ENCODE measurements at regions of chr20 and their contacts with region 1.

Region 1: DNA sequence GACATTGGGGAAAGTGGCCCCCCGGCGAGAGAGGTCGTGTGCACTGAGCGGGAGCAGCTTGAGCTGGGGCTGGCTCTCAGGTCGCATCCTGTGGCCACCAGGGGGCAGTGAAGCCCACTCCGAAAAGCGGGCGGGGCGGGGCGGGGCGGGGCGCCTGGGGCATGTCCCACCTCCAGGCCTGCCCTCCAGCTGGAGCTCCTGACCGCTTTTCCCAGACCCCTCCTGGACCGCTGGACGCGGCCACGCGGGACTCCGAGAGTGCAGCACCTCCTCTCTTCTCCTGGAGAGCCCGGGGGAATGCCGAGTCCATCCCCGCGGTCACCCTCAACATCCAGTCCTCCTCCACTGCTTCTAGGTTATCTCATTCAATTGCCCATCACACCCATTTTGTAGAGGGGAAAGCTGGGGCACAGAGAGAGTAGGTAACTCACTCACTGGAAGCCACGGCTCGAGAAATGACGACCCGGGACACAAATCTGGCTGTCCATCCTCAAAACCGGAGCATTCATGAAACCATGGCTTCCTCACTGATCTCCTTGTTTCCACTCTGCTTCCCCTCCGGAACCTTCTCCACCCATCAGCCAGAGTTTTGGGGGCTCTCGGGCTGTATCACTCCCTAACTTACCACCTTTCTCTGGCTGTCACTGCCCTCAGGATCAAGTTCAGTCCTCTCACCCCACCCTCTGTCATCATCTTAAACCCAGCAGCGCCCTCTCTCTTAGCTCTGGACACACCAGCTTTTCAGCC is 24.1 kb downstream of the COX4I2 start:
- DNase-seq: peak; percentile 78 to 81
- H3K4me3 ChIP-seq: no peak overlapping the region
- H3K27ac ChIP-seq: peak overlapping the region; percentile 59 to 69 (median 68)
- H3K4me1 ChIP-seq: peaks cover 26 to 51% of the 10 kb centered on the region in 2 donors
- H3K27me3 ChIP-seq: no peaks in the 10 kb centered on the region
- CTCF ChIP-seq: peak; percentile 44 to 85 (median 66)
- POLR2A ChIP-seq: peak in 1 of 2 donors; percentile 66

Region 2: DNA sequence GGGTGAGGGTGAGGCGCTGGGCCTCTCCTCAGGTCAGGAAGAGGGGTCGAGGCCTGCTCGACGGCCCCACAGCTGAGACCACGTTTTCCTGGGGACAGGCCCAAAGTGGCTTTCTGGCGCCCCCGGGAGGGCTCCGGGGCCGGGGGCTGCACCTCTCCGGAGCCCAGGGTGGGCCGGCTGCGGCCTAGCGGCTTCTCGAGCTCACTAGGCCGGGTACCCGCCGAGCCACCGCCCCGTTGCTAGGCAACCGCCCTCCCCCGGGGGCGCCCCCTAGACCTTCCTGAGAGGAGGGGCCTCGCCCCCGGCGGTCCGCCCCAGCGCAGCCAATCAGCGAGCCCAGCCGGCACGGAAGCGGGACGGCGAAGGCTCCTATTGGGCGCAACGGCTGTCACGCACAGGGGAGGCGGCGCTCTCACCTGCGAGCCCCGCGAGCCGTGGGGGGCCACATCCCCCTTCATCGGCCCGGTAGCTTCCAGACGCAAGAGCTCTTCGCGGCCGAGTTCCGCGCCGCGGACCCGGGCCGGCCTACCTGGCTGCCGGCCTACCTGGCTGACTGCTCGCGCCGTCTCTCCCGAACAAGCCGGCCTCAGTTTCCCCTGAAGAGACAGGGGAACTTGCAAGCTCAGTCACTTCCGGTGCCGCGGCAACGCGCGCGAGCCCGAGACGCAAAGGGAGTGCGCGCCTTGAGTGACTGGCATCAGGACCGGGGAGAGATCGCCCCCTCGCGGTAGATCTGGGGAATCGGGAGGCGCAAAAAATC is 61.7 kb after region 1 on chr20:
- intact Hi-C with region 1: loop called (anchors 2 kb)
- DNase-seq: peak; percentile 97 to 98
- H3K4me3 ChIP-seq: peak overlapping the region; percentile 42 to 65 (median 52)
- H3K27ac ChIP-seq: peak overlapping the region; percentile 98 to 99 (median 98)
- H3K4me1 ChIP-seq: peaks cover 15 to 34% of the 10 kb centered on the region in 2 donors
- H3K27me3 ChIP-seq: no peaks in the 10 kb centered on the region
- CTCF ChIP-seq: peak; percentile 84 to 99 (median 96)
- POLR2A ChIP-seq: peak; percentile 11 to 72